AG04449 (cell line): ENCODE measurements at regions of chr12 and their contacts with region 1.

Region 1: GRCh38 chr12:54431911-54432814 is 13.1 kb upstream of the ITGA5 start:
- DNase-seq: no peak
- H3K4me3 ChIP-seq: no peak overlapping the region
- CTCF ChIP-seq: no peak

Region 2: GRCh38 chr12:54411391-54412241 is 20.5 kb before region 1 on chr12:
- CTCF ChIA-PET with region 1: interaction called, 940 read pairs
- POLR2A ChIA-PET with region 1: interaction called, 6 read pairs
- DNase-seq: peak; percentile 77
- H3K4me3 ChIP-seq: no peak overlapping the region
- CTCF ChIP-seq: no peak